GM18951 (cell line): ENCODE measurements at regions of chr1 and their contacts with region 1.

Region 1: DNA sequence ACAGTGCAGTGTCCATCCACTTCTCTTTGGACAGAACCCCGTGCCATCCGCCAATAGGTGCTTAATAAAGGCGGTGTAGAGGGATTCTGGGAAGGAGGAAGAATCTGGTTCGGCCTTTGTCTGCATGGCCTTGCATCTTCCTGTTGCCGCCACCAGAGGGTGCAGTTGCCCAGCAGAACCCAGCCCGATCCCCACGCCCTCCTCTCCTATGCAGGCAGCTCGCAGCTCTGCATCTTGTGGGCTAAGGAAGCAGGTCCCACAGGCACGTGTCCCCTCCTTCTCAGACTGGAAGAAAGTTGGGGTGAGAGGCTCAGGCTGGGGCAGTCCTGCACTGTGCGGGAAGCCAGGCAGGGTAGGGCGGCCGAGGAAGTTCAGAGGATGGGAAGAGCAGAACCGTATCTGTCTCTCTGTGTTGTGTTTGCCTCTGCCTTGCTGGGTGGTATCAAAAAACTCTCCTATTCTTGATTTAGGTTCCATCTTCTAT is 20.8 kb downstream of the NAV1 start:
- POLR2A ChIP-seq: no peak

Region 2: DNA sequence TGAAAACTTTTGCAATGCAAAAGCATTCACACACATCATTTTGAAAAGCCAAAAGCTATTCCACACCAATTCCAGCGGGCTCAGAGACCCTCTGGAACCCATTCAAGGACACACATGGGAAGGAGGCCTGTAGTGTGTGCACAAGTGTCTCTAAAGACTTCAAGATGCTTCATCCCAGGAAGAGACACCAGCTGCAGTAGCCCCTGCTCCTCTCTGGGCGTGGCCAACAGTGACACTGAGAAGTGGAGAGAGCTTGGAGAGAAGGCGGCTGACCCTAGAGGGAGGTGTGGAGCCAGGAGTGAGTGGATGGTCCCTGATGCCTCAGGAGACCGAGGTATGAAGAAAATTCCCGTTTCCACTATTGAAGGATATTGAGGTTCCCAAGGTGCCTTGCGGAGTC is 123.3 kb before region 1 on chr1:
- in situ Hi-C with region 1: no loop called
- POLR2A ChIP-seq: no peak

Region 3: GRCh38 chr1:201696217-201696761 is 136.6 kb after region 1 on chr1:
- in situ Hi-C with region 1: loop called (anchors 10 kb)
- POLR2A ChIP-seq: no peak

Region 4: DNA sequence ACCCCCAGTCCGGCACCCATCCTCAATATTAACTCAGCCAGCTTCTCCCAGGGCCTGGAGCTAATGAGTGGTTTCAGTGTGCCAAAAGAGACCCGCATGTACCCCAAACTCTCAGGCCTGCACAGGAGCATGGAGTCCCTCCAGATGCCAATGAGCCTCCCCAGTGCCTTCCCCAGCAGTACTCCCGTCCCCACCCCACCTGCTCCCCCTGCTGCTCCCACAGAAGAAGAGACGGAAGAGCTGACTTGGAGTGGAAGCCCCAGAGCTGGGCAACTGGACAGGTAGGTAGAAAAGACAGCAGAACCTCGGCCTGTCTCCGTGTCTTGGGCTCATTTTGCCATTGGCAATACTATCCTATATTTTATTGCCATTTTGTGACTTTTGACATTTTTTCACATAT is 223.9 kb after region 1 on chr1:
- in situ Hi-C with region 1: loop called (anchors 10 kb)
- POLR2A ChIP-seq: no peak

Region 5: DNA sequence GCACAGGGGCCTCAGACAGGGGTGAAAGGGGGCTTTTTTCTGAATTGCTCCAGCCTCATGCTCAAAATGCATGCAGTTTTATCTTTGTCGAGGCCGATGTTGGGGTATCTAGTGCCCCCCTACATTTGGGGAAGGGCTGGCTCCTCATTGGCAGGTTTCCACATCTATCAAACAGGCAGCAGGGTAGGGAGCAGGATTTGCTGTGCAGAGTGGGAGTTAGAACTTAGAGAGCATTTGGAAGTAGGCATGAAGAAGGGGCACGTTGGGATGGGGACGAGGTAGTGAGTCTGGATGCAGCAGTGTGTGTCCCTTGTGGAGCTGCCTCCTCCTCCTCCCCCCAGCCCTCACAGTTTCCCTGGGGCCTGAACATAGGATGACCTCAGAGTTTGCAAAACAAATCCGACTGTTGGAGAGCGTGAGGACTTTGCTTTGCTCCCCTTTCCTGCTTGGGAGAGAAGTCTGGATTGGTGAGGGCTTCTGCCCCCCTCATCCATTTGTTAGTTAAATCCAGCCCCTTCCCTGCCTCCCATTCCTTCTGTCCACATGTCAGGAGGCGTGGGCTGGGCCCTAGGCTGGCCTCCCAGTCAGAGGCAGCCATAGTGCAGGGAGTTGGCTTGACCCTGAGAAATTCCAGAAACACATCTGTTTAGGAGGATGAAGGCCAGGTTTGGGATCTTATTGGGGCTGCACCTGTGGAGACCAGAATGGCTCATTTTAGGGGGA is 526.1 kb after region 1 on chr1:
- in situ Hi-C with region 1: no loop called
- POLR2A ChIP-seq: no peak